ENCODE measurements at regions of chr1 and their contacts with region 1.

Region 1: DNA sequence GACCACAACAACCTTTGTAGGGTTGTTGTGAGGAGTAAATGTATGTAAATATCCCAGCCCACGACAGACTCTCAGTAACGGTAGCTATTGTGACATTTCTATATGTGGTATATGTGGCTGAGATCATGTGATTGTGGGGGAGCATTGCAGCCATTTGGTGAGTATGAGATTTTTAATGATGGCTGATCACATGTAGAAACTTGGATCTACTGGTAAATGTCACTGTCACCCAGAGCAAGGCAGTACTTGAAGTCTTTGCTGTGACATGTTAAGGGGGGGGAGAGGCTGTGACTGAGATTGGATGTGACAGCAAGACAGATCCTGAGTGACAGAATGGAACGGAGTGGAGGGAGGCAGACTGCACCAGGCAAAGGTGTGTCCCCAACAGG is 23.9 kb upstream of the MEF2D start:
- DNase-seq: peak; percentile 50 to 83 (median 78)
- H3K4me3 ChIP-seq: peak overlapping the region in 3 of 7 experiments; percentile 47 to 62 (median 49)
- H3K27ac ChIP-seq: peak overlapping the region in 1 of 2 experiments; percentile 73
- H3K4me1 ChIP-seq: peaks cover 18 to 47% (median 27%) of the 10 kb centered on the region in 4 experiments
- H3K27me3 ChIP-seq: no peaks in the 10 kb centered on the region

Region 2: DNA sequence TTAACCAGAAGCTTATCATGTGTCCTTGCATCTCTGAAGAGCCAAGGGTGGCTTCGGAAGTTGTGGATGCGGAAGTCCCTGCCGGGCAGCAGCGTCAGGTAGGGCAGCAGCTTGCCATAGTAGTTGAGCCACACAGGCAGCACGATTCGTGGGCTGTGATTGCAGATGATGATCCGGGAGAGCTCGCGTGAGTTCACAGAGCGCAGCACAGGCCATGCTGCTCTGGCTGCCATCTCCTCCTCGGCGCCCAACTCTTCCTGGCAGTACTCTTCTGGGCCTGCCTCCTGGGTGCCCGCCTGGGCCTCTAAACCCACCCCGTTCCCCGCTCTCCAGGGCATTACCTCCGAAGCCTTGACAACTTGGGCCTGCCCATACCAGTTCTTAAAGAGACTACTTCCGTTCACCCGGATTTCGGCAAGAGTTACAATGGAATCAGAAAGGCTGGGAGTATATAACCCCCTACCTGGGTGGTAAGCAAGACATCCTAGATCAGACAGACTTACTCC is 225.6 kb before region 1 on chr1 and contains the start of gene VHLL:
- CTCF ChIA-PET with region 1: no interaction called
- POLR2A ChIA-PET with region 1: no interaction called
- DNase-seq: no peak
- H3K4me3 ChIP-seq: no peak within 1 kb of the TSS
- H3K27ac ChIP-seq: no peak within 1 kb of the TSS
- H3K4me1 ChIP-seq: peaks cover 9 to 15% (median 12%) of the 10 kb centered on the region in 4 experiments
- H3K27me3 ChIP-seq: no peaks in the 10 kb centered on the region

Region 3: GRCh38 chr1:156338180-156338973 is 186.1 kb before region 1 on chr1 and contains the starts of genes CCT3 and TSACC:
- CTCF ChIA-PET with region 1: no interaction called
- POLR2A ChIA-PET with region 1: no interaction called
- DNase-seq: peak; percentile 100
- H3K4me3 ChIP-seq: peak within 1 kb of the TSS; percentile 73 to 98 (median 92)
- H3K27ac ChIP-seq: peak within 1 kb of the TSS; percentile 50 to 86
- H3K4me1 ChIP-seq: peaks cover 6 to 22% (median 17%) of the 10 kb centered on the region in 4 experiments
- H3K27me3 ChIP-seq: no peaks in the 10 kb centered on the region

Region 4: DNA sequence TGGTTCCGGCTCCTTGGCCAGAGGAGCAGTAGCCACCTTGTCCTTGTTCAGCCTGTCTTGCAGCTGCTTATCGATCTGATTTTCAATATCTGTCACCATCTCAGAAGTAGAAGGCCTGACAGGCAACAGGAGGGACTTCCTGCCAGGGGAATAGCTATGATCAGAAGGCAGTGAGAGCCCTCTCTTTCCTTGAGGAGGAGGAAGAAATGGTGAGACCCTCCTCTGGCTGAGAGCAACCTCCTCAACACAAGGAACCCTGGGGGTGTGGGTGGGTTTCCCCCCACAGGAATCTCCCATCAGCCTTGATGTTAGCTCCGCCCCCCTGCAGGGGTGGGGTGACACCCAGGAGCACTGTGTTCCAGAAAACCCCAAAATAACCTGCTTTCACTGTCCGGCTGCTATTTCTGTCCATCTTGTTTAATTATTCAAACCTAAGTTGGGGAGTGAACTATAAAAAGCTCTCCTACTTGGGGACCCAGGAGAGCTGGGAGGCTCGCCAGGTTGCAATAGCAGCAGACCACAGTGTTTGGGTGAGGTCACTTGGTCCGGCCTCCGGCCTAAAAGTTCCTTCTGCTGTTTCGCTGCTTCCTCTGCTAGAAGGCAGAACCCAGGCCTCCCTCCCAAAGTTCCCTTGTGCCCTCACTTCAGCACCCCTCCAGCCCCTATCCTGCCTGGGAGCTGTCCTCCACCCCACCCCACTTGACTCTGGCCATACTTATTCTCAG is 16.1 kb before region 1 on chr1:
- CTCF ChIA-PET with region 1: interaction called, 23 read pairs
- POLR2A ChIA-PET with region 1: interaction called, 8 read pairs
- DNase-seq: no peak
- H3K4me3 ChIP-seq: no peak overlapping the region
- H3K27ac ChIP-seq: peak overlapping the region in 1 of 2 experiments; percentile 27
- H3K4me1 ChIP-seq: peaks cover 13 to 52% (median 40%) of the 10 kb centered on the region in 4 experiments
- H3K27me3 ChIP-seq: no peaks in the 10 kb centered on the region